Astrocyte of the cerebellum (primary cell): ENCODE measurements at regions of chr3 and their contacts with region 1.

Region 1: DNA sequence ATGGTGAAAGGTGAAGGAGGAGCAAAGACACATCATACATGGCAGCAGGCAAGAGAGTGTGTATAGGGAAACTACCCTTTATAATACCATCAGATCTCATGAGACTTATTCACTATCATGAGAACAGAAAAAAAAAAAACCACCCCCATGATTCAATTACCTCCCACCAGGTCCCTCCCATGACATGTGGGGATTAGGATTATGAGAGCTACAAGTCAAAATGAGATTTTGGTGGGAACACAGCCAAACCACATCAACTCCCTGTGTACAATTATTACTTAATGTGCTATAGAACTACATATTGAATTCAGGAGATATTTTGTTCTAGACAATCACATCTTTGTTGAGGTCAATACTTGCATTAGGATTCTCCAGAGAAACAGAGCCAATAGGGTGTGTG is 313.4 kb downstream of the CNTN6 start:
- DNase-seq: no peak
- H3K4me3 ChIP-seq: no peak overlapping the region
- CTCF ChIP-seq: no peak

Region 2: DNA sequence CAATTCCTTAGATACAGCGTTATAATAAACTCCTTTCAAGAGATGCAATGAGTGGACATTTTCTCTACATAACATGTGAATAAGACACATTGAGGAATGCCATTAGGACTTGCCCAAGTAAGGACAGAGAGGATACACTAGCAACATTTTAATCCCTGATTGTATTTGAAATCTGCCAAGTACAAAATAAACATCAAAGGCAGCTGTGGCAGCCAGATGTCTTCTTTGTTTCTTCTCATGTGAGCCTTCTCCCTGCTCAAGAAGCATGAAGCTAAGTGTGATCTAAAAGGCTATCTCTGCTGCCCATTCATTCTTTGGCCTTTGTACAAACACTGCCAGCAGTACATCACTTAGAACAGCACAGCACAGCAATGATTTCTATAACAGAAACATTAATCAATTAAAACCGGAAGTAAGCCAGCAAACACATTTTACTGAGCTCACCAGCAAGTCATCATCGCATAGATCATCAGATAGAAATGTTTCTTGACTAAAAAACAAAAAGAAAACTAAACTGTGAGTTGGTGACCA is 50.6 kb after region 1 on chr3:
- in situ Hi-C with region 1: loop called (anchors 5 kb)
- DNase-seq: no peak
- H3K4me3 ChIP-seq: no peak overlapping the region
- CTCF ChIP-seq: no peak